Gastrocnemius medialis (tissue), 4 donors: ENCODE measurements at regions of chr6 and their contacts with region 1.

Region 1: DNA sequence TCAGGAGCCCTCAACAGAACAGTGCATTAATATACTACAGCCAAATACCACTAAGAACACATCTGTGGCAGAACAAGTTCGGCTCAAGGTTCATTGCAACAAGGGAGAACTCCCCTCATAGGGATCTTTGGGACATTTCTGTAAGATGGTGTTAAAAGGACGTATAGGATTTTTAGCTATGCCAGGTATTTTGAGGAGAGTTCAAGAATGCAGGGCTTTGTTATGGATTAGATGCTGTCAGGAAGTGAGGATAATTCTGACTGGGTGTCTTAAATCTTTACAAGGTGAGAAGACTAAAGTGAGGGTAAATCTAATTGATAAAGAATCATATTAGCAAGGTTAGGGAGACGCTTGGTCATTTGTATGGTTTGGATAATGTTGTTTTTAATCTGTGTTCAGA is 83.7 kb upstream of the AHI1 start:
- DNase-seq: no peak
- ATAC-seq: no peak
- H3K4me3 ChIP-seq: no peak overlapping the region
- H3K27ac ChIP-seq: no peak overlapping the region
- H3K4me1 ChIP-seq: no peaks in the 10 kb centered on the region
- H3K27me3 ChIP-seq: no peaks in the 10 kb centered on the region
- CTCF ChIP-seq: no peak
- POLR2A ChIP-seq: no peak

Region 2: GRCh38 chr6:134802426-134803058 is 778.7 kb before region 1 on chr6:
- in situ Hi-C with region 1: no loop called
- intact Hi-C with region 1: no loop called
- DNase-seq: no peak
- ATAC-seq: no peak
- H3K4me3 ChIP-seq: no peak overlapping the region
- H3K27ac ChIP-seq: no peak overlapping the region
- H3K4me1 ChIP-seq: peaks cover 16 to 17% of the 10 kb centered on the region in 2 donors
- H3K27me3 ChIP-seq: no peaks in the 10 kb centered on the region
- CTCF ChIP-seq: no peak
- POLR2A ChIP-seq: no peak

Region 3: GRCh38 chr6:135514706-135515105 is 66.5 kb before region 1 on chr6:
- in situ Hi-C with region 1: no loop called
- intact Hi-C with region 1: no loop called
- DNase-seq: no peak
- ATAC-seq: no peak
- H3K4me3 ChIP-seq: no peak overlapping the region
- H3K27ac ChIP-seq: no peak overlapping the region
- H3K4me1 ChIP-seq: no peaks in the 10 kb centered on the region
- H3K27me3 ChIP-seq: no peaks in the 10 kb centered on the region
- CTCF ChIP-seq: no peak
- POLR2A ChIP-seq: no peak

Region 4: DNA sequence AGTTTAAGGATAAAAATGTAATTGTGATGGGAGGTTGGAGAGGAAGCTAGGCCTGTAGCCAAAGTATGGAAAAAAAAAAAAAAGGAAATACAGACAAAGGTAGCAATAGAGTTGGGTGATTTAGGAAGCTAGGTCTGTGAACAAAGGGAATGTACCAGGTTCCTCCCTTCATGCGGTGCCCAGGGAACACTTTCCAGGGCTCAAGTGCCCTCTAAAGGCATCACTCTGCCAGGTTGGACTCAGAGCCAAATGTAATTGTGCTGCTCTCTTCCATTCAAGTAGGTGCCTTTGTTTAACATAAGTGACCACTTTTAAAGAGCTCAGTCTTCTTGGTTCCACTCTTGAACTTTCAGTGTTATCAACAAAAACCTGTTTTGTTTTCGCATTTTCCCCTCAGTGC is 76.0 kb after region 1 on chr6:
- in situ Hi-C with region 1: no loop called
- intact Hi-C with region 1: loop called (anchors 2 kb)
- DNase-seq: no peak
- ATAC-seq: no peak
- H3K4me3 ChIP-seq: no peak overlapping the region
- H3K27ac ChIP-seq: no peak overlapping the region
- H3K4me1 ChIP-seq: no peaks in the 10 kb centered on the region
- H3K27me3 ChIP-seq: no peaks in the 10 kb centered on the region
- CTCF ChIP-seq: no peak
- POLR2A ChIP-seq: no peak